Caco-2 (cell line): ENCODE measurements at regions of chr1 and their contacts with region 1.

Region 1: DNA sequence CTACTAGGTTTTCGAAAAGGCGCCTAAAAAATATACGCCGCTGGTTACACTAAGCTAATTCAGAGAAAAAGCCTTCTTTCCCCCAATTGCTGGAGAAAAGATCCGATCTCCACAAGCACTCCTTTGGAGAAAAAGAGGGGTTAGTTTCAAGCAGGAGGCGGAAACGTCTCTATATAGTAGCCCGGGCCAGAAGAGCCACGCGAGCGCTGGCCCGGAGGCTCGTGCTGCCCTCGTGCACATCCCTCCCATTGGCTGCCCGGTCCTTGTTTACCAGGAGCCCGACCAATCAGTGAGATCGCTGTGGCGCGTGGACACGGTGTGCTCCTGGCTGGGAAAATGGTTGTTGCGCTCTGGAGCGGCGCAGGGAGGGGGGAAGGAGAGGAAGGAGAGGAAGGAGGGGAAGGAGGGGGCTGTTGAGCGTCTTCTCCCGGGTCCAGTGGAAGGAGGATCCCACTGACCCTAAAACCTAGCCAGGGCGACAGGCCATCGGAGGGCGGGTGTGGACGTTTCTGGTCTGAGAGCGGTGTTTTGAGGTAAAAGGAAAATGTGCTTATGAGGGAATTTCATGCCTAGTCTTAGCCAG is at the start of gene TXNIP:
- DNase-seq: peak; percentile 95 to 98
- H3K4me3 ChIP-seq: peak within 1 kb of the TSS; percentile 91
- H3K4me3 Mint-ChIP-seq: peak within 1 kb of the TSS; percentile 84
- H3K27ac Mint-ChIP-seq: peak within 1 kb of the TSS; percentile 93
- H3K4me1 ChIP-seq: peaks cover 13% of the 10 kb centered on the region; the same call in 1 of the 2 replicates
- H3K4me1 Mint-ChIP-seq: peaks cover 15% of the 10 kb centered on the region
- H3K27me3 ChIP-seq: no peaks in the 10 kb centered on the region
- H3K27me3 Mint-ChIP-seq: no peaks in the 10 kb centered on the region
- CTCF ChIP-seq: no peak
- total RNA-seq, gene TXNIP: 27.5 and 38.6 TPM in 2 replicates

Region 2: DNA sequence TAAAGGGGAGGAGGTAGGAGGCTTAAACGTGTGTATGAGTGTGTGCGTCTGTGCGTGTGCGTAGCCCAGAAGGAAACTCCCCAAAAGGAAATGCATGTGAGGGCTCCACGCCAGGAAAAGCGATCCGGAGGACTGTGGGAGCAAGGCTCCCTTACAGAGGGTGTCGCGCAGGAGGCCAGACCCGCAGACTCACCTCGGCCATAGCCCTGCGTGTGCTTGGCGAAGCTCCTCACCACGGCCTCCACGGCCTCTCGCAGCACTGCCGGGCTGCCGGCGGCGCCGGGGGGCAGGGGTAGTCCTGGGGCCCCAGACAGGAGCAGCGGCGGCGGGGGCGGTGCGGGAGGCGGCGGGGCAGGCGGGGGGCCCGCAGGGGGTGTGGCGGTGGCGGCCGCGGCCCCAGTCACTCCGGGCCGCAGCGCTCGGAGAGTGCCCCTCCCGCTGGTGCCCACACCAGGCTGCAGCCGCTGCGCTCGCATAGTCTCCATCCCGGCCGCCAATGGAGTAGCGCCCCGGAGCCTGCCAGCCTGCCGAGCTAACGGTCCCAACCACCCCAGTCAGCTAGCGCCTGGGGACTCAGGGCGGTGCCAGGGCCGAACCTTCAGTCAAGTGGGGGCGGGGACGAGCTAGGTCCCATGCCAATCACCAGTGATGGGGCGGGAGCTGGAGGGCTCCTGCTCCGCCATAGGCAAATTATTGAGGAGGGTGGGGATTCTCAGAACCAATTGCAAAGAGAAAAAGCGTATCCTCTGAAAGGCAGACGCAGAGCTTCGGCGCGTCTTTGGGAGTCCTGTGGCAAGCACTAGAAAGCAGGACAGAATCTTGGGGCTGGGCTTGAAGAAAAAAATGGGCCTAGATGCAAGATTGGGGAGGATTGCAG is 38.8 kb before region 1 on chr1 and contains the start of gene LIX1L:
- CTCF ChIA-PET with region 1: no interaction called
- POLR2A ChIA-PET with region 1: no interaction called
- intact Hi-C with region 1: no loop called
- DNase-seq: peak; percentile 91 to 92
- H3K4me3 ChIP-seq: peak within 1 kb of the TSS; percentile 46
- H3K4me3 Mint-ChIP-seq: peak within 1 kb of the TSS; percentile 68
- H3K27ac Mint-ChIP-seq: no peak within 1 kb of the TSS
- H3K4me1 ChIP-seq: peaks cover 21% of the 10 kb centered on the region
- H3K4me1 Mint-ChIP-seq: peaks cover 20% of the 10 kb centered on the region
- H3K27me3 ChIP-seq: no peaks in the 10 kb centered on the region; the same call in 1 of the 2 replicates
- H3K27me3 Mint-ChIP-seq: peaks cover 14% of the 10 kb centered on the region
- CTCF ChIP-seq: no peak
- total RNA-seq, gene LIX1L: 0.82 and 1.1 TPM in 2 replicates

Region 3: GRCh38 chr1:146007506-146008133 is 11.1 kb after region 1 on chr1:
- CTCF ChIA-PET with region 1: interaction called, 4 read pairs
- POLR2A ChIA-PET with region 1: no interaction called
- intact Hi-C with region 1: loop called (anchors 1 kb)
- DNase-seq: no peak
- H3K4me3 ChIP-seq: no peak overlapping the region
- H3K4me3 Mint-ChIP-seq: no peak overlapping the region
- H3K27ac Mint-ChIP-seq: no peak overlapping the region
- H3K4me1 ChIP-seq: 0 out of 2 replicates have a peak, but pooled peaks cover 3% of the 10 kb centered on the region
- H3K4me1 Mint-ChIP-seq: peaks cover 5% of the 10 kb centered on the region
- H3K27me3 ChIP-seq: no peaks in the 10 kb centered on the region
- H3K27me3 Mint-ChIP-seq: no peaks in the 10 kb centered on the region
- CTCF ChIP-seq: no peak